ENCODE measurements at regions of chr2 and their contacts with region 1.

Region 1: GRCh38 chr2:232444409-232445148 is 11.4 kb upstream of the ALPI start:
- DNase-seq: peak in 2 of 3 donors; percentile 64 to 71
- ATAC-seq: peak; percentile 58
- H3K4me3 ChIP-seq: no peak overlapping the region
- H3K4me1 ChIP-seq: no peaks in the 10 kb centered on the region
- CTCF ChIP-seq: peak; percentile 74

Region 2: GRCh38 chr2:231900486-231900942 is 544.1 kb before region 1 on chr2:
- intact Hi-C with region 1: loop called (anchors 10 kb)
- DNase-seq: peak; percentile 78 to 91 (median 87)
- ATAC-seq: peak; percentile 89
- H3K4me3 ChIP-seq: no peak overlapping the region
- H3K4me1 ChIP-seq: no peaks in the 10 kb centered on the region
- CTCF ChIP-seq: peak; percentile 86

Region 3: GRCh38 chr2:232348936-232349335 is 95.6 kb before region 1 on chr2:
- intact Hi-C with region 1: no loop called
- DNase-seq: peak; percentile 76 to 79 (median 78)
- ATAC-seq: peak; percentile 95
- H3K4me3 ChIP-seq: no peak overlapping the region
- H3K4me1 ChIP-seq: peaks cover 5% of the 10 kb centered on the region
- CTCF ChIP-seq: no peak

Region 4: GRCh38 chr2:232519581-232520438 is 75.2 kb after region 1 on chr2 and contains the start of gene PRSS56:
- intact Hi-C with region 1: loop called in 1 of 2 experiments (anchors 5 kb)
- DNase-seq: no peak
- ATAC-seq: no peak
- H3K4me3 ChIP-seq: no peak within 1 kb of the TSS
- H3K4me1 ChIP-seq: peaks cover 17% of the 10 kb centered on the region
- CTCF ChIP-seq: no peak
- total RNA-seq, gene PRSS56: not detected